Left ventricle myocardium inferior (tissue), 1 donor: ENCODE measurements at regions of chr7 and their contacts with region 1.

Region 1: GRCh38 chr7:4681886-4682620 is at the start of gene FOXK1:
- DNase-seq: peak; percentile 83
- H3K4me3 ChIP-seq: peak within 1 kb of the TSS; percentile 97
- H3K27ac ChIP-seq: peak within 1 kb of the TSS; percentile 93
- H3K4me1 ChIP-seq: peaks cover 45% of the 10 kb centered on the region
- H3K27me3 ChIP-seq: no peaks in the 10 kb centered on the region
- CTCF ChIP-seq: no peak
- total RNA-seq, gene FOXK1: 18.3 TPM

Region 2: DNA sequence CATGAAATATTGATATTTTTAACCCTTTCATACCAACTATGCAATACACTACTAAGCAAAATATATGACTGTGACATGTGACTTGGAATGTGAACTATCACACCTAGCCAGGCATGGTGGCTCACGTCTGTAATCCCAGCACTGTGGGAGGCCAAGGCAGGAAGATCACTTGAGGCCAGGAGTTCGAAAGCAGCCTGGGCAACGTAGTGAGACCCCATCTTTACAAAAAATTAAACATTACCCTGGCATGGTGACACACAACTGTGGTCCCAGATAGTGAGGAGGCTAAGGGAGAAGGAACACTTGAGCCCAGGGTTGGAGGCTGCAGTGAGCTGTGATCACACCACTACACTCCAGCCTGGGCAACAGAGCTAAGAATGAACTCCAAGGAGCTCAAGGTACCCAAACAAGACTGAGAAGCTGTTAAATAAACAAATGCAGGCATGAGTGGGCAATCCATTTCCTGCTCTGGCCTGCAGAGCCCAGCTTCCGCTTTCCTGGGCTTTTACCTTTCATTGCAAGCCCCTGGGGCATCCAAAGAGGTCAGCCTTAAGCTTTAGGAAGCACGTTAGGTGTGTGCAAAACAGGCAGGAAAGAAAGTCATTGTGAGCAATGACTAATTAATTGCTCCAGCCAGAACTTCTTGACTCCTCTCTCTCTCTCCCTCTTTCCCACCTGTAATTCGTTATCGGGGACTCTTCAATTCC is 162.1 kb before region 1 on chr7:
- intact Hi-C with region 1: no loop called
- DNase-seq: no peak
- H3K4me3 ChIP-seq: no peak overlapping the region
- H3K27ac ChIP-seq: no peak overlapping the region
- H3K4me1 ChIP-seq: no peaks in the 10 kb centered on the region
- H3K27me3 ChIP-seq: peaks cover 30% of the 10 kb centered on the region
- CTCF ChIP-seq: no peak

Region 3: DNA sequence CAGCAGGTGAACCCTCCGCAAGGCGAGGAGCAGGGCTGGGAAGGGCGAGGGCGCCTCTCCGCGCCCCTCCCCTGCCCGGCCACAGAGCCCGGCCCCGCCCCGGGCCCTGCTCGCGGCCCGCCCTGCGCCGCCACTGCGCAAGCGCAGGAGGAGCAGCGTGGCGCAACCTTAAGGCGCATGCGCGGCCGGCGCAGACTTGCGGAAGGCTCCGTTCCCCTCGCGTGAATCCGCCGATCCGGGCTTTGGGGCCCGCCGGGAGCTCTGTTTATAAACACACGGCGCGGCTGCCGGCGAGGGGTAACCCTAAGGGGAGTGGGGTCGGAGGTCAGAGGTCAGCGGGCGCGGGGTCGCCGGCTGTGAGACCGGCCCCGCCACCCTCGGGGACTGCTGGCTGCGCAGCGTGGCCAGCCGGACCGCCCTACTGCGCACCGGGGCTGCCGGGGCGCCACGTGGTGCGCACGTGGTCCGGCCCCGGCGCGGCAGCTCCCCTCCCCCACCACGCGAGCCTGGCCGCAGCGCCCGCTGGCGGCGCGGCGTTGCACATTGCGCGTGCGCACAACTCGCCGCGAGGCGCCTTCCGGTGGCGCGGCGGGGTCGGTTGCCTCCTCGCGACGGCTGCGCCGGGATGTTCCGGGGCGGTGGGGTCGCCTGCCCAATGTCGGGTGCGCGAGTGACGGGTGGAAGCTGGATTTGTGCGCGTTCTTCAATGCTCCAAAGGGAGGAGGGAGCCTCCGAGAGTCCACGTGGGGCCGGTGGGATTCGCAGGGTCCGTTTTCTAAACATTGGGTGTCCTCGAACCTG is 40.2 kb before region 1 on chr7:
- intact Hi-C with region 1: loop called (anchors 5 kb)
- DNase-seq: peak; percentile 95
- H3K4me3 ChIP-seq: peak overlapping the region; percentile 78
- H3K27ac ChIP-seq: peak overlapping the region; percentile 91
- H3K4me1 ChIP-seq: peaks cover 13% of the 10 kb centered on the region
- H3K27me3 ChIP-seq: no peaks in the 10 kb centered on the region
- CTCF ChIP-seq: peak; percentile 62

Region 4: GRCh38 chr7:4744391-4745264 is 62.6 kb after region 1 on chr7:
- intact Hi-C with region 1: loop called (anchors 10 kb)
- DNase-seq: peak; percentile 100
- H3K4me3 ChIP-seq: peak overlapping the region; percentile 55
- H3K27ac ChIP-seq: peak overlapping the region; percentile 94
- H3K4me1 ChIP-seq: peaks cover 72% of the 10 kb centered on the region
- H3K27me3 ChIP-seq: no peaks in the 10 kb centered on the region
- CTCF ChIP-seq: no peak